Left ventricle myocardium inferior (tissue), 1 donor: ENCODE measurements at regions of chr7 and their contacts with region 1.

Region 1: DNA sequence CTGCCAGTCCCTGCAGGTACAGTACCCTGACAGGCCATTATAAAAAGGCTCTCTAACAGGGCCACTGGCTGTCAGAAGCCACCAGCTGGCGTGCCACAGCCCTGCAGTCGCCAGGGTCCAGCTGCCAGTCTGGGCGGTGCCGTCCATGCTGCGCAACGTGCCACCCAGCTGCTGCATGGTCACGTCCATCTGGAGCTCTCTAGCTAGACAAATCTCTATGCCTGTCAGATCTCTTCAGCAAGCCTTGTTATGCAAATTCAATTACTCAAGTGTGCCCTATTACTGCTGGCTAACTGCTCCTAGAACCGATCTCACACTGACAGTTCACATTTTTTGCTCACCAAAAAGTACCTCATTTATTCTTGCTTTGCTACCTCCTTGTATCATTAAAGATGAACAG is 75.9 kb downstream of the HIBADH start:
- DNase-seq: no peak
- H3K4me3 ChIP-seq: no peak overlapping the region
- H3K27ac ChIP-seq: no peak overlapping the region
- H3K4me1 ChIP-seq: no peaks in the 10 kb centered on the region
- H3K27me3 ChIP-seq: no peaks in the 10 kb centered on the region
- CTCF ChIP-seq: no peak

Region 2: GRCh38 chr7:27501001-27501400 is 85.8 kb before region 1 on chr7:
- intact Hi-C with region 1: no loop called
- DNase-seq: no peak
- H3K4me3 ChIP-seq: no peak overlapping the region
- H3K27ac ChIP-seq: no peak overlapping the region
- H3K4me1 ChIP-seq: no peaks in the 10 kb centered on the region
- H3K27me3 ChIP-seq: no peaks in the 10 kb centered on the region
- CTCF ChIP-seq: no peak

Region 3: GRCh38 chr7:27651702-27652101 is 64.9 kb after region 1 on chr7:
- intact Hi-C with region 1: loop called (anchors 10 kb)
- DNase-seq: no peak
- H3K4me3 ChIP-seq: no peak overlapping the region
- H3K27ac ChIP-seq: no peak overlapping the region
- H3K4me1 ChIP-seq: peaks cover 11% of the 10 kb centered on the region
- H3K27me3 ChIP-seq: no peaks in the 10 kb centered on the region
- CTCF ChIP-seq: no peak

Region 4: DNA sequence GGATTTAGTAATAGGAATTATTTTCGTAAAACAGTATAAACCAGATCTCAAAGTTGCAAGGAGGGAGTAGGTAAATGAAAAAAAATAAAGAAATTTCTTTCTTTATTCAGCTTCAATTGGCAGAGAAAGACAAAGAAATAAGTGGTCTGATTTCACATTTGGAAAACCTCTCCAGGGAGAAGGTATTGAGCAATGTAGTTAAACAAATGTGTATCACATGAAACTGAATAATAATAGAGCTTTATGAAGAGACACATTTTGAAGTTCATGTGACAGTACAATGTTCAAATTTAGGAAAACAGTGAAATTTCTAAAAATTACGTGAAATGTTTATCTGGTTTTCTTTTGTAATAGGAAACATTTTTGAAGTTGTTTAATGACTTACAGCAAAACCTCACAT is 216.2 kb after region 1 on chr7:
- intact Hi-C with region 1: no loop called
- DNase-seq: no peak
- H3K4me3 ChIP-seq: no peak overlapping the region
- H3K27ac ChIP-seq: no peak overlapping the region
- H3K4me1 ChIP-seq: peaks cover 9% of the 10 kb centered on the region
- H3K27me3 ChIP-seq: no peaks in the 10 kb centered on the region
- CTCF ChIP-seq: no peak